Endothelial cell of umbilical vein (primary cell): ENCODE measurements at regions of chr15 and their contacts with region 1.

Region 1: DNA sequence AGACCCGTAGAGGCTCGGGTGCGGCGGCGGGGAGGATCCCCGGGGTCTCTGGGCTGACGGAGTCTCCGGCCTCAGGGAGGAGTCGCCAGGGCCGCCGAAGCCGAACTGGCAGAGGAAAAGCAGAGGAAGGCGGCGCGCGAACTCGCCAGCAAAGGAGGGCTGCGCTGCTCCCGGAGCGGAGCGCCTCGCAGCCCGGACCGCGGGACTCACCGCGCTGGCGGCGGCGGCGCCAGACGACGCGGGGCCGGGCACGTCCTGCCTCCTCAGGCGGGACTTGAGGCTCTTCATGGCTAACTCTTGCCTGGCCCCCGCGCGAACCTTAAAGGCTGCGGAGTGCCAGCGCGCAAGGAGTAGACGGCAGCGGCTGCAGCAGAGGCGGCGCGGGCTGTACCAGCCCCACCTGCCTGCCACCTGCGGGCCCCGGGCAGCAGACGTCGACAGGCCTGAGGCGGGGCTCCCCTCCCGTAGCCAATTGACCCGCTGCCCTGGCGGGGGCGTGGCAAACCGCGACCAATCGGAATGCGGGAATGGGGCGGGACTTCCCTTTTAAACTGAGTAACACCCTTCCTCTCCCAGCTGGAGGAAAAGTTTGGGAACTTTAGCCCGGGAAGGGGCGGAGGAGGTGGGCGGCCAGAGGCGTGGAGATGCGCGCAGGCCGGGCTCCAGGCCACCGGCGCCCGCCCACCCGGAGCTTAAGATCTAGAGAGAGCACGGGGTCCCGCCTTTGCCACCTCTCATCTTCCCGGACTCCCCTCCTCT is at the start of gene UACA:
- DNase-seq: peak; percentile 99
- H3K4me3 ChIP-seq: peak within 1 kb of the TSS; percentile 71 to 90 (median 89)
- H3K27ac ChIP-seq: peak within 1 kb of the TSS; percentile 83
- H3K4me1 ChIP-seq: peaks cover 32% of the 10 kb centered on the region
- H3K27me3 ChIP-seq: no peaks in the 10 kb centered on the region
- CTCF ChIP-seq: no peak
- POLR2A ChIP-seq: peak; percentile 91
- total RNA-seq, gene UACA: 270 and 292 TPM in 2 replicates

Region 2: DNA sequence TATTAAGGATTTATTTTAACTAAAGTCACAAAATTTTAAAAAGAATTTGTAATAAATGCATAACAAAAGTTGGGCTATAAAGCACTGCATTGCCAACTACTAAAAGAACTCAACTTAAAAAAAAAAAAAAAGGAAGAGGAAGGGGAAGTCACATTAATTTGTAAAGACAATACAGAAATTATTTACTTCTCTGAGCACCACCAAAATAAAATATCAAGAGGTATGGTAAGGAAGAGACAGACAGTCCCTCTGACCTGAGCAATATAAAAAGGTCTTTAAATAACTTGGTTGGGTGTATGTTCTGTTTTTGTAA is 83.4 kb before region 1 on chr15:
- CTCF ChIA-PET with region 1: interaction called, 12 read pairs
- POLR2A ChIA-PET with region 1: no interaction called
- dilution Hi-C with region 1: no loop called
- intact Hi-C with region 1: no loop called
- DNase-seq: no peak
- H3K4me3 ChIP-seq: no peak overlapping the region
- H3K27ac ChIP-seq: no peak overlapping the region
- H3K4me1 ChIP-seq: peaks cover 12% of the 10 kb centered on the region
- H3K27me3 ChIP-seq: no peaks in the 10 kb centered on the region
- CTCF ChIP-seq: no peak
- POLR2A ChIP-seq: no peak

Region 3: GRCh38 chr15:70701891-70702568 is 61.3 kb before region 1 on chr15:
- CTCF ChIA-PET with region 1: interaction called, 3 read pairs
- POLR2A ChIA-PET with region 1: no interaction called
- dilution Hi-C with region 1: no loop called
- intact Hi-C with region 1: loop called (anchors 2 kb)
- DNase-seq: peak; percentile 86
- H3K4me3 ChIP-seq: peak overlapping the region in 2 of 3 experiments; percentile 35 to 96
- H3K27ac ChIP-seq: peak overlapping the region; percentile 94
- H3K4me1 ChIP-seq: peaks cover 55% of the 10 kb centered on the region
- H3K27me3 ChIP-seq: no peaks in the 10 kb centered on the region
- CTCF ChIP-seq: no peak
- POLR2A ChIP-seq: peak; percentile 20

Region 4: GRCh38 chr15:70799667-70800450 is 36.6 kb after region 1 on chr15:
- CTCF ChIA-PET with region 1: interaction called, 8 read pairs
- POLR2A ChIA-PET with region 1: interaction called, 6 read pairs
- dilution Hi-C with region 1: no loop called
- intact Hi-C with region 1: loop called (anchors 2 kb)
- DNase-seq: peak; percentile 94
- H3K4me3 ChIP-seq: no peak overlapping the region
- H3K27ac ChIP-seq: peak overlapping the region; percentile 66
- H3K4me1 ChIP-seq: peaks cover 33% of the 10 kb centered on the region
- H3K27me3 ChIP-seq: no peaks in the 10 kb centered on the region
- CTCF ChIP-seq: no peak
- POLR2A ChIP-seq: no peak

Region 5: DNA sequence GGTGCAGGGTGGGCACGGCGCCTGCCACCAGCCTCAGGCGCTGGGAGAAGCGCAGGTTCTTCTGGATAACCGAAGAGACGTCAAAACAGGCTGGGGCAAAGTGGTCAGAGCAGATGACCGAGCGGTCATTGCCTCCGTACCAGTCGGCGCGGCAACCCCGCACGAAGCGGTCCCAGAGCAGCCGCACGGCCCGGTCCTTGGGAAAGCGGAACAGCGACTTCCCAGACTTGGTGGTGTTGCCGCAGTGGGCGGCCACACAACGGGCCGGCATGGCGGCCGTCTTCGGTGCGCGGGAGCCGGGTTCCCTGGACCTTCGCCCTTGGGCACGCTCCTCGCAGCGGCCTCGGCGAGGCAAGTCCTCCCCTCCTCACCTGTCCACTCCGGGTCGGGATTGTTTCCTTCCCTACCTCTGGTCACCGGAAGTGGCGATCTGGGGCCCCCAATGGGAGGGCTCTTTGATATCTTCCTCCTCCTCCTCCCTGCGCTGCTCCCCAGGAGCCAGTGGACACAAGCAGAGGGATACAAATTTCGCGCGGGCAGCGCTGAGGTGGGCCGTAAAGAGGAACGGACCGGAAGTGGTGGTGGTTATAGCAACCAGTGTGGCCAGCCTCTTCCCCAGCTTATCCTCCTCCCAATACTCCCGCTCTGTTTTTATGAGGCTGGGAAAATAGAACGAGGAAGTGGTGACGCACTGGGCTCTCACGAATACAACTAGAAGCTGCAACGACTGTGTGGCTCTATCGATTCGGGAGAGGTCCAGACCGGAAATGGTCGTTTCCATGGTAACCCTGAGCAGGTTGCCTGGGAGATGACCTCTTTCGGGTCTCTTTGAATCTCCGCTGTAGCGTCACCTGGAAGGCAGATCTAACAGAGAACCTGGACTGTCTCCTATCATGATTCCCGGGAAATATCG is 129.0 kb after region 1 on chr15 and contains the starts of genes LRRC49 and THAP10:
- CTCF ChIA-PET with region 1: no interaction called
- POLR2A ChIA-PET with region 1: no interaction called
- dilution Hi-C with region 1: no loop called
- intact Hi-C with region 1: loop called (anchors 2 kb)
- DNase-seq: peak; percentile 98
- H3K4me3 ChIP-seq: peak within 1 kb of the TSS; percentile 47 to 81 (median 69)
- H3K27ac ChIP-seq: peak within 1 kb of the TSS; percentile 86
- H3K4me1 ChIP-seq: peaks cover 17% of the 10 kb centered on the region
- H3K27me3 ChIP-seq: no peaks in the 10 kb centered on the region
- CTCF ChIP-seq: no peak
- POLR2A ChIP-seq: no peak
- total RNA-seq, gene LRRC49: 6.6 and 7.4 TPM in 2 replicates
- total RNA-seq, gene THAP10: 2.7 and 4.0 TPM in 2 replicates

Region 6: GRCh38 chr15:71237456-71238188 is 474.3 kb after region 1 on chr15:
- CTCF ChIA-PET with region 1: no interaction called
- POLR2A ChIA-PET with region 1: no interaction called
- dilution Hi-C with region 1: no loop called
- intact Hi-C with region 1: no loop called
- DNase-seq: peak; percentile 84
- H3K4me3 ChIP-seq: no peak overlapping the region
- H3K27ac ChIP-seq: peak overlapping the region; percentile 51
- H3K4me1 ChIP-seq: peaks cover 13% of the 10 kb centered on the region
- H3K27me3 ChIP-seq: no peaks in the 10 kb centered on the region
- CTCF ChIP-seq: no peak
- POLR2A ChIP-seq: no peak